ENCODE measurements at regions of chr10 and their contacts with region 1.

Region 1: DNA sequence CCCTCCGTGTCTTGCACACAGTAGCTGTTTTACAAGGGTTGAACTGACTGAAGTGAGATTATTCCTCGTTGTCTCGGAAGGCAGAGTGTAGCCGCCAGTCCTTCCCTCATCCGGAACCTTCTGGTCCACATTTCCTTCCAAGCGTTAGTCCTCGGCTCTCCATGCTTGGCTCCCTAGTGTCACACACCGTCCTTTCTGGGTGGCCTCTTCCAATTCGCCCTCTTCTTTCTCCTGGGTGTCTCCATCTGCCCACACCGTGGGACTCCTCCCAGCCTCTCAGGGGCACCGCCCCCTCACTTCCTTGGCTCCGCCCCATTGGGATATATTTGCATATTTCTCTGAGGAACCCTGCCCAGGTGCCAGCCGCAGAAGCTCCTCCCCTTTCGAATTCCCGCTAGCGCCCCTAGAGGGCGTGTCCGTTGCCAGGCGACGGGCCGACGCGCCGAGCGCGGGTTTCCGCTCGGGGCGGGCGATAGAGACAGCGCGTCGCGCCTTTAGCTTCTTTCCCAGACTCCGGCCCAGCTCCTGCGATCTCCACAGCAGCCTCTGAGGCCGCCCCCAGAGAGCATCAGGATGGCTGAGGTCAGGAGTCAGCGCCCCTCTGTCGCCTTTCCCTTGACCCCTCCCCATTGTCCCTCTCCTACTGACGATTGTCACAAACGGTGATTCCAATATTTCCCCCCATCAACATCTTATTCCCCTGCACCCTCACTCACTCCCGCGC is at the start of gene CFAP58:
- DNase-seq: peak; percentile 94
- H3K4me3 Mint-ChIP-seq: no peak within 1 kb of the TSS
- H3K27ac Mint-ChIP-seq: no peak within 1 kb of the TSS
- H3K4me1 Mint-ChIP-seq: no peaks in the 10 kb centered on the region
- H3K27me3 Mint-ChIP-seq: no peaks in the 10 kb centered on the region

Region 2: GRCh38 chr10:104268716-104269645 is 84.5 kb before region 1 on chr10 and contains the start of gene GSTO2:
- CTCF ChIA-PET with region 1: interaction called, 66 read pairs
- DNase-seq: peak; percentile 99
- H3K4me3 Mint-ChIP-seq: peak within 1 kb of the TSS; percentile 92
- H3K27ac Mint-ChIP-seq: peak within 1 kb of the TSS; percentile 95
- H3K4me1 Mint-ChIP-seq: peaks cover 48% of the 10 kb centered on the region
- H3K27me3 Mint-ChIP-seq: no peaks in the 10 kb centered on the region

Region 3: DNA sequence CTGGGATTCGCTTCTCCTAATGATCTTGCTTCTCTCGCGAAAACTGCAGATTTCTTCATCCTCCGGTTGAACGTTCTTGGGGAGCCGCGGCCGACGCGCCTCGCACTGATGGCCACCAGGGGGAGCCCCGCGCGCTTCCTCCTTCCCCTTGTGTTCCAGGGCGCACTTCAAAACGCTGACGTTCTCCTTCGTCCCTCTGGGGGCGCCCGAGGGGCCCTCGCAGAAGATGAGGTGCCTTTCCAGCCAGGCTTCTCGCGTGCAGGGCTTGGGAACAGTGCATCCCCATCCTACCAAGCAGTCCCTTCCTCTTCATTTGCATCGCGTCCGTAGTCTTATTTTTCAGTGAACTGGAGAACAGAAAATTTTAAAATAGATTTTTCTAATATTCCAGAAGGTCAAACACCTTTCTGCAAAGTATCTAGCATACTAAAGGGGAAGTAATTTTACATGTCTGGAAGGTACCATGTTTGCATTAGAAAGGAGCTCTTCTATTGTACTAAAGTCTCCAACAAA is 62.0 kb before region 1 on chr10:
- CTCF ChIA-PET with region 1: interaction called, 257 read pairs
- DNase-seq: peak; percentile 91
- H3K4me3 Mint-ChIP-seq: no peak overlapping the region
- H3K27ac Mint-ChIP-seq: no peak overlapping the region
- H3K4me1 Mint-ChIP-seq: peaks cover 14% of the 10 kb centered on the region
- H3K27me3 Mint-ChIP-seq: peaks cover 35% of the 10 kb centered on the region

Region 4: GRCh38 chr10:104300736-104301292 is 52.7 kb before region 1 on chr10:
- CTCF ChIA-PET with region 1: interaction called, 265 read pairs
- DNase-seq: peak; percentile 45
- H3K4me3 Mint-ChIP-seq: no peak overlapping the region
- H3K27ac Mint-ChIP-seq: peak overlapping the region; percentile 65
- H3K4me1 Mint-ChIP-seq: peaks cover 38% of the 10 kb centered on the region
- H3K27me3 Mint-ChIP-seq: peaks cover 29% of the 10 kb centered on the region

Region 5: DNA sequence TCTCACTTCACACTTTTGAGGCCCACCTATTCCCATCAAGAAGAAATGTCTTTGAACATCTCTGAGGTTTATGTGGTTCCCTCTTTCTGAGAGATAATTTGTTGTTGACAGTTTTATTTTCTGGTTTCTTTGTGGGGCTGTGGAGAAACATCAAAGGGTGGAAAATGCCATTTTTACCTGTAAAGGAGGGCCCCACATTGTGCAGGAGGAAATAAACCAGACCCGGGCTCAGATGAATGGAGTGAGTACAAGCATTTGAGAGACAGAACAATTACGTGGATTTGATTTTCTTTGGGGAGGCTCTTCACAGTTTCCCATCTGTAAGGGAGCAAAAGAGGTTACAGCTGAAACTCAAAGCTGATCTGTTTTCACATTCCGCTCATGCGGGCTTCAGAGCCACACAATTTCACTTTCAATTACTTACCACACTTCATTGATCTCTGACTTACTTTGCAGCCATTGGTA is 45.0 kb before region 1 on chr10:
- CTCF ChIA-PET with region 1: interaction called, 265 read pairs
- DNase-seq: peak; percentile 61
- H3K4me3 Mint-ChIP-seq: peak overlapping the region; percentile 22
- H3K27ac Mint-ChIP-seq: peak overlapping the region; percentile 92
- H3K4me1 Mint-ChIP-seq: peaks cover 80% of the 10 kb centered on the region
- H3K27me3 Mint-ChIP-seq: peaks cover 5% of the 10 kb centered on the region

Region 6: DNA sequence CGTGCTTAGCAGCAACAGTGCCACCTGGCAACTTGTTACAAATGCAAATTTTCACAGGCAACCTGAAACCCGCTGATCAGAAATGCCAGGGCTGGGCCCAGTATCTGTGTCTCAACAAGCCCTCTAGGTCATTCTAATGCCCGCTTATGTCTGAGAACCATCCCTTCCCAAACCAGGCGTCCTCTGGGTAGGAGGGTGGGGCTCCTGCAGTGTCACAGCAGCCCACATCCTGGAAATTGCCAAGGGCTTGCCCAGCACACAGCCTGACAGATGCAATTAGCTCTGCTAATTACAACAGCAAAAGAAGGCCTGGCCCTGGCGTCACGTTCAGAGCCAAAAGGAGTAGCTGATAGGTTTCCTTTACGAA is 31.1 kb before region 1 on chr10:
- CTCF ChIA-PET with region 1: interaction called, 16 read pairs
- DNase-seq: peak; percentile 62
- H3K4me3 Mint-ChIP-seq: peak overlapping the region; percentile 65
- H3K27ac Mint-ChIP-seq: peak overlapping the region; percentile 90
- H3K4me1 Mint-ChIP-seq: peaks cover 93% of the 10 kb centered on the region
- H3K27me3 Mint-ChIP-seq: no peaks in the 10 kb centered on the region

Region 7: GRCh38 chr10:104337974-104338735 is 15.3 kb before region 1 on chr10 and contains the start of gene ITPRIP:
- CTCF ChIA-PET with region 1: interaction called, 40 read pairs
- DNase-seq: peak; percentile 80
- H3K4me3 Mint-ChIP-seq: peak within 1 kb of the TSS; percentile 82
- H3K27ac Mint-ChIP-seq: peak within 1 kb of the TSS; percentile 99
- H3K4me1 Mint-ChIP-seq: peaks cover 50% of the 10 kb centered on the region
- H3K27me3 Mint-ChIP-seq: peaks cover 15% of the 10 kb centered on the region

Region 8: GRCh38 chr10:104501864-104502579 is 148.5 kb after region 1 on chr10:
- CTCF ChIA-PET with region 1: no interaction called
- DNase-seq: no peak
- H3K4me3 Mint-ChIP-seq: no peak overlapping the region
- H3K27ac Mint-ChIP-seq: no peak overlapping the region
- H3K4me1 Mint-ChIP-seq: no peaks in the 10 kb centered on the region
- H3K27me3 Mint-ChIP-seq: peaks cover 10% of the 10 kb centered on the region

Region 9: GRCh38 chr10:104735036-104735761 is 381.7 kb after region 1 on chr10:
- CTCF ChIA-PET with region 1: no interaction called
- DNase-seq: no peak
- H3K4me3 Mint-ChIP-seq: no peak overlapping the region
- H3K27ac Mint-ChIP-seq: no peak overlapping the region
- H3K4me1 Mint-ChIP-seq: no peaks in the 10 kb centered on the region
- H3K27me3 Mint-ChIP-seq: peaks cover 20% of the 10 kb centered on the region